ENCODE measurements at regions of chr22 and their contacts with region 1.

Region 1: GRCh38 chr22:40346178-40347118 is at the start of gene ADSL:
- DNase-seq: peak; percentile 88 to 94
- ATAC-seq: peak; percentile 80 to 86
- H3K4me3 ChIP-seq: peak within 1 kb of the TSS; percentile 70 to 87 (median 76)
- H3K27ac ChIP-seq: peak within 1 kb of the TSS; percentile 90 to 98 (median 96)
- H3K4me1 ChIP-seq: peaks cover 50 to 61% of the 10 kb centered on the region in 2 donors
- H3K27me3 ChIP-seq: no peaks in the 10 kb centered on the region
- CTCF ChIP-seq: peak in 3 of 5 experiments; percentile 7 to 38 (median 29)
- POLR2A ChIP-seq: peak; percentile 98 to 99
- total RNA-seq, gene ADSL: 249 to 283 (median 262) TPM

Region 2: GRCh38 chr22:40031766-40032470 is 314.5 kb before region 1 on chr22:
- in situ Hi-C with region 1: no loop called
- intact Hi-C with region 1: no loop called
- DNase-seq: peak in 1 of 2 donors; percentile 39
- ATAC-seq: peak in 1 of 2 donors; percentile 40
- H3K4me3 ChIP-seq: no peak overlapping the region
- H3K27ac ChIP-seq: no peak overlapping the region
- H3K4me1 ChIP-seq: no peaks in the 10 kb centered on the region
- H3K27me3 ChIP-seq: no peaks in the 10 kb centered on the region
- CTCF ChIP-seq: no peak
- POLR2A ChIP-seq: no peak

Region 3: DNA sequence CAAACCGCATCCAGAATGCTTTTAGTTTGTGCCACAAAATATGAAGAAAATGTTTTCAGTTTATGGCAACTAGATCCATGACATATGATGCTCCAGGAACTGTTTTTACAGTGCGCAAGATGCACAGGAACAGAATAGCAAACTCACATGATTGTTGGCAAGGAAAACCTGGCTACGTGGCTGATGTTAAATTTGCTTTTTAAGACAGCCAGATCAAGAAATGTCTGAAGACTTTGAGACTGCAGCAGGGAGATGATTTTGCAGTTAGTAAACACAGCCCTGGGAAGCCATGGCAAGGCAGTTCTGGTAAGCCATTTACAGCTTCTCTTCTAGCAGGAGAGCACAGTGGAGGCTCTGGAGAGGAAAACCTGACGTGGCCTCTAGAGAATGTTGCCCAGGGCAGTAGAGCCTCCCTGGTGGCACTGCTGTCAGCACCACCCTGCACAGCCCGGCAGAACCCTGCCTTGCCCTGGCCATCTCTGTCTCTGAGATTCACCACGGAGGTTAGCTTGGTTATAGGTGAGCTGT is 238.5 kb before region 1 on chr22:
- in situ Hi-C with region 1: no loop called
- intact Hi-C with region 1: loop called (anchors 5 kb)
- DNase-seq: peak; percentile 25 to 39
- ATAC-seq: peak; percentile 81 to 83
- H3K4me3 ChIP-seq: peak overlapping the region; percentile 28 to 40 (median 32)
- H3K27ac ChIP-seq: peak overlapping the region; percentile 70 to 86 (median 80)
- H3K4me1 ChIP-seq: peaks cover 42 to 60% of the 10 kb centered on the region in 2 donors
- H3K27me3 ChIP-seq: no peaks in the 10 kb centered on the region
- CTCF ChIP-seq: no peak
- POLR2A ChIP-seq: no peak

Region 4: DNA sequence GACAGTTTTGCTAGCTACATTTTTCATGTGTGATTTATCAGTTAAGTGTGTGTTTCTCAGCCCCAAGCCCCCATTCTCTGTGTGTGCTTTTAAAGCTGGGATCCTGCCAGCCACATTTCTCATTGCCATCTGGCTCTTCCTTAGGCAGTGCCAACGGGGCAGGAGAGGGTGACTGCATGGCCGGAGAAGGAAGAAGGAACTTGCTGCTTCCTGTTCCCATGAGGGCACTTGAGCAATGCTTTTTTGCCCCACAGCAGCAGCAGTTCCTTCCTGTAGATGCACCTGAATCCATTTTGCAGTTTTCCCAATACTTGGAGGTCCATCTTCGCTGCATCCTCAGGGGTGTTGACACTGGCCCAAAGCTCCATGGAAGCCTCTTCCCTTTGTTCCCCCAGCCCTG is 131.2 kb before region 1 on chr22:
- in situ Hi-C with region 1: no loop called
- intact Hi-C with region 1: loop called (anchors 5 kb)
- DNase-seq: peak; percentile 20 to 40
- ATAC-seq: no peak
- H3K4me3 ChIP-seq: no peak overlapping the region
- H3K27ac ChIP-seq: peak overlapping the region; percentile 3 to 44 (median 13)
- H3K4me1 ChIP-seq: peaks cover 76 to 82% of the 10 kb centered on the region in 2 donors
- H3K27me3 ChIP-seq: no peaks in the 10 kb centered on the region
- CTCF ChIP-seq: no peak
- POLR2A ChIP-seq: no peak

Region 5: DNA sequence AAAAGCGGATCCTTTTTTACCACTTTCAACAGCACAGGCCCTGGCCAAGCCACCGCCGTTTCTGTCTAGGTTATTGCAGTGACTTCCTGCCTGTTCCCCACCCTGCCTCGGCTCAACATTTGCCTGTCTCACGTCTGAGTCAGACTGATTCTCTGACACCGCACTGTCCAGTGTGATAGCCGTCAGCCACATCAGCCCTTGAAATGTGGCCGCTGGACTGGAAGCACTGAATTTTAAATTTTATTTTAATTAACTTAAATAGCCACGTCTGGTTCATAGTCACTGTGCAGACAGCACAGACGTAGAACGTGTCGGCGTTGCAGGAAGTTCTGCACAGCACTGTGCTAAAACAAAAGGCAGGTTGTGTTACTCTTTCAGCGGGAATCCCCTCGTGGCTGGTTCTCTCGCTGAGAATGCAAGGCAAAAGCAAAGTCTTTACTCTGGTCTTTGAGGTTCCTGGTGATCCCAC is 56.4 kb before region 1 on chr22:
- in situ Hi-C with region 1: loop called in 1 of 4 experiments (anchors 10 kb)
- intact Hi-C with region 1: no loop called
- DNase-seq: no peak
- ATAC-seq: peak in 1 of 2 donors; percentile 34
- H3K4me3 ChIP-seq: no peak overlapping the region
- H3K27ac ChIP-seq: peak overlapping the region in 1 of 4 donors; percentile 14
- H3K4me1 ChIP-seq: no peaks in the 10 kb centered on the region
- H3K27me3 ChIP-seq: no peaks in the 10 kb centered on the region
- CTCF ChIP-seq: no peak
- POLR2A ChIP-seq: no peak

Region 6: GRCh38 chr22:40368016-40368415 is 21.6 kb after region 1 on chr22:
- in situ Hi-C with region 1: no loop called
- intact Hi-C with region 1: no loop called
- DNase-seq: no peak
- ATAC-seq: peak in 1 of 2 donors; percentile 7
- H3K4me3 ChIP-seq: no peak overlapping the region
- H3K27ac ChIP-seq: peak overlapping the region; percentile 32 to 69 (median 59)
- H3K4me1 ChIP-seq: peaks cover 18 to 21% of the 10 kb centered on the region in 2 donors
- H3K27me3 ChIP-seq: no peaks in the 10 kb centered on the region
- CTCF ChIP-seq: no peak
- POLR2A ChIP-seq: no peak

Region 7: GRCh38 chr22:40487663-40488249 is 141.3 kb after region 1 on chr22:
- in situ Hi-C with region 1: no loop called
- intact Hi-C with region 1: no loop called
- DNase-seq: no peak
- ATAC-seq: no peak
- H3K4me3 ChIP-seq: no peak overlapping the region
- H3K27ac ChIP-seq: peak overlapping the region; percentile 45 to 74 (median 52)
- H3K4me1 ChIP-seq: peaks cover 53 to 60% of the 10 kb centered on the region in 2 donors
- H3K27me3 ChIP-seq: no peaks in the 10 kb centered on the region
- CTCF ChIP-seq: peak; percentile 44 to 66 (median 54)
- POLR2A ChIP-seq: no peak

Region 8: DNA sequence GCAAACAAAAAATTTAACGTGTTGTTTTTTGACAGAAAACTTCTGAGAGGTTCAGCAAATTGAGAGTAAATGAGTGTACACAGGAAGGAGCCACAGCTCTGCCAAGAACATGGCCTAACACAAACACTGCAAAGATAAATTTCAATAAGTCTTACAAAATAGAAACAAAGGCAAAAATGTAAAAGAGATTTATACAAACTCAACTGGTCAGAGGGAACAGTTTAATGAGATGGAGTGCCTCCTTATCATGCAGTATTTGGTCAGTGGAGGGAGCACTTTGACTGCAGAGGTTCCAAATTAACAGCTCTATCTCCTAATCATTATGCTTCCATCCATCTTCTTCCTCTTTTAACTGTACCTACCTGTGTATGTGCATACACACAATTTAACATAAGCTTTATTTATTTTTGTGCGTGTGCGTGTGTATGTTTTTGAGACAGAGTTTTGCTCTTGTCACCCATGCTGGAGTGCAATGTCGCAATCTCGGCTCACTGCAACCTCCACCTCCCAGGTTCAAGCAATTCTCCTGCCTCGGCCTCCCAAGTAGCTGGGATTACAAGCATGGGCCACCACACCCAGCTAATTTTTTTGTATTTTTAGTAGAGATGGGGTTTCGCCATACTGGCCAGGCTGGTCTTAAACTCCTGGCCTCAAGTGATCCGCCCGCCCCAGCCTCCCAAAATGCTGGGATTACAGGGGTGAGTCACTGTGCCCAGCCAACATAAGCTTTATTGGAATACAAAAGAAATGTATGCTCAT is 178.1 kb after region 1 on chr22:
- in situ Hi-C with region 1: no loop called
- intact Hi-C with region 1: no loop called
- DNase-seq: no peak
- ATAC-seq: no peak
- H3K4me3 ChIP-seq: no peak overlapping the region
- H3K27ac ChIP-seq: no peak overlapping the region
- H3K4me1 ChIP-seq: peaks cover 3 to 5% of the 10 kb centered on the region in 2 donors
- H3K27me3 ChIP-seq: no peaks in the 10 kb centered on the region
- CTCF ChIP-seq: no peak
- POLR2A ChIP-seq: no peak

Region 9: DNA sequence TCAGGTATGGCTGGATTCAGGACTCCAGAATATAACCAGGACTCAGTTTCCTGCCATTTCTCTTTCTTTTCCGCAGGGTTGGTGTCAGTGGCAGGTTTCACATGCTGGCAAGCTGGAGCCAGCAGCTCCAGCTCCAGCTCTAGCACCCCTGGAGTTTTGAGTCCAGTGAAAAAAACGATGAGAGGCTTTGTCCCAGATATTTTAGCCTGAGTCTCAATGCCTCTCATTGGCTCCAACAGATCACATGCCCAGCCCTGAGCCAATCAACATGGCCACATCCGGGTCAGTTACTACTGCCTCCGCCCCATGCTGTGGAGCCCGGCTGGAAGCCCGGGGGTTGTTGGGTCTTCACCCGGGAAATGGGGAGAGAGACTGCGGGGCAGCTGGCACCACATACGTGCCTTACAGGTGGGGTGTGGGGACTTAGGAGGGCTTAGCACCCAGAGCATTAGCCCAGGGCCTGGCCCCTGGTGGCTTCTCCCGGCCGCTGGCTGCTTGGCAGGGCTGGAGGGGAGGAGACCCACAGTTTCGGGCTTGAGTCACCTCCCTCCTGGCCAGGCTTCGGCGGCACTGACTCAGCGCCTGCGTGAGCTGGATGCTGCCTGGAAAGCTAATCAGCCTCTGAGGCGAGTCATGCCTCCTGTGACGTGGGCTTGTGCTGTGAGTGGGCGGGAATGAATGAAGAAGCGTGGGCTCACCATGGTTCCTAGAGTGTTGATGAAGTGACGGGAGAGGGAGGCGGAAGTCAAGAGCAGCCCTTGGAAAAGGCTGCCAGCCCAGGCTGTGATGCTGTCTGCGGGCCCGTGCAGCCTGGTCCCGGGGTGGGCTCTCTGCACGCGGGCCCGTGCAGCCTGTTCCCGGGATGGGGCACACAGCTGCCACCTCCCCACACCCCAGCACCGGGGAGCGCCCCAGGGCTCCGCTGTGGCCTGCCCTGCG is 305.4 kb after region 1 on chr22:
- in situ Hi-C with region 1: no loop called
- intact Hi-C with region 1: loop called (anchors 5 kb)
- DNase-seq: peak; percentile 95 to 97
- ATAC-seq: peak; percentile 92 to 94
- H3K4me3 ChIP-seq: peak overlapping the region; percentile 63 to 83 (median 76)
- H3K27ac ChIP-seq: peak overlapping the region; percentile 94 to 99 (median 97)
- H3K4me1 ChIP-seq: peaks cover 37% of the 10 kb centered on the region in 2 donors
- H3K27me3 ChIP-seq: no peaks in the 10 kb centered on the region
- CTCF ChIP-seq: peak in 2 of 5 experiments; percentile 22 to 26
- POLR2A ChIP-seq: peak; percentile 83 to 91